ENCODE measurements at regions of chr5 and their contacts with region 1.

Region 1: GRCh38 chr5:76715736-76716455 is at the start of gene F2R:
- DNase-seq: peak in 1 of 2 experiments; percentile 80
- H3K4me3 ChIP-seq: peak within 1 kb of the TSS; percentile 60 to 88 (median 85)
- H3K27ac ChIP-seq: peak within 1 kb of the TSS; percentile 56
- H3K4me1 ChIP-seq: peaks cover 0 to 2% (median 0%) of the 10 kb centered on the region in 4 experiments; a peak in 2 of 7 replicates
- H3K27me3 ChIP-seq: peaks cover 5 to 19% (median 14%) of the 10 kb centered on the region in 4 experiments
- CTCF ChIP-seq: peak; percentile 55 to 76 (median 57)
- EP300 ChIP-seq: no peak
- POLR2A ChIP-seq: no peak
- RAD21 ChIP-seq: peak; percentile 43 to 58; a peak in 3 of 4 replicates
- total RNA-seq, gene F2R: 23.8 and 25.0 TPM in 2 replicates

Region 2: GRCh38 chr5:76705574-76705973 is 10.3 kb before region 1 on chr5:
- CTCF ChIA-PET with region 1: interaction called, 10 read pairs
- POLR2A ChIA-PET with region 1: interaction called, 3 read pairs
- DNase-seq: no peak
- H3K4me3 ChIP-seq: no peak overlapping the region
- H3K27ac ChIP-seq: no peak overlapping the region
- H3K4me1 ChIP-seq: no peaks in the 10 kb centered on the region
- H3K27me3 ChIP-seq: no peaks in the 10 kb centered on the region
- CTCF ChIP-seq: no peak
- EP300 ChIP-seq: no peak
- POLR2A ChIP-seq: no peak
- RAD21 ChIP-seq: no peak

Region 3: DNA sequence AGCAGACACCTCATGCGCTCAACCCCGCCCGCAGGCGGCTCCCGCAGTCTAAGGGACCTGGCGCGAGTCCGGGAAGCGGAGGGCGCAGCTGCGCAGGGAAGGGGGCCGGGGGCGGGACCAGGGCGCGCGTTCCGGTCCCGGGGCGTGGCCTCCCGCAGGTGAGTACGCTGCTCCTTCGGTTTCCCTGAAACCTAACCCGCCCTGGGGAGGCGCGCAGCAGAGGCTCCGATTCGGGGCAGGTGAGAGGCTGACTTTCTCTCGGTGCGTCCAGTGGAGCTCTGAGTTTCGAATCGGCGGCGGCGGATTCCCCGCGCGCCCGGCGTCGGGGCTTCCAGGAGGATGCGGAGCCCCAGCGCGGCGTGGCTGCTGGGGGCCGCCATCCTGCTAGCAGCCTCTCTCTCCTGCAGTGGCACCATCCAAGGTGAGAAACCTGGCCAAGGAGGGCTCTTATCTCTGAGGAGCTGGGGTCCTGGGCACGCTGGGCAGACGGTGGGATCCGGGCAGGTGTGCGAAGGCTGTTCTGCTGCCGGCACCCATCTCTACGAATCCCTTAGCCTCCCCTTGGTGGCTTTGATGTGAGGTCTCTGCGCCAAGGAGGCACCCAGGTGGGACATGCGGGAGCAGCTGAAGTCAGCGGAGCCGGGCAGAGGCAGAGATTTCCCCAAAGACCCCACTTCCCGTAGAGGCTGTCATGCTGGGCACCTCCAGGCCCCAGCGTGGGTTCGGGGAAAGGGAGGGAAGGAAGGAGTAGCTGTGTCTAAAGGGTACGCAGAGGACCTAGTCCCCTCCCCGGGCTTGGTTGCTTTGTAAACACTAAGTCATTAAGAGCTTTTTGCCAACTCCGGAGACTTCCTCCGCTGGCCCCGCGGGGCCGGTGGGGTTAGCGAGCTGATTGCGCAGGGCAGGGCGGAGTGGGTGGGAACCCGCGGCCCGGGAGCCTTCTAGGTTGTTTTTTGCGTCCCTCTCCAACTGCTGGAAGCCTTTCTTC is 103.2 kb after region 1 on chr5 and contains the start of gene F2RL1:
- CTCF ChIA-PET with region 1: interaction called, 10 read pairs
- POLR2A ChIA-PET with region 1: no interaction called
- DNase-seq: peak; percentile 88 to 92
- H3K4me3 ChIP-seq: peak within 1 kb of the TSS; percentile 73 to 99 (median 86)
- H3K27ac ChIP-seq: peak within 1 kb of the TSS; percentile 39; the same call in 1 of the 2 replicates
- H3K4me1 ChIP-seq: peaks cover 0 to 16% (median 8%) of the 10 kb centered on the region in 4 experiments; a peak in 5 of 7 replicates
- H3K27me3 ChIP-seq: peaks cover 0 to 5% (median 4%) of the 10 kb centered on the region in 4 experiments; a peak in 2 of 7 replicates
- CTCF ChIP-seq: 0 out of 4 replicates have a peak, but pooled peaks of 1 of the 3 experiments have one; percentile 6
- EP300 ChIP-seq: peak in 1 of 2 experiments; percentile 88; a peak in 1 of 3 replicates
- POLR2A ChIP-seq: peak; percentile 79 to 81
- RAD21 ChIP-seq: peak in 1 of 2 experiments; percentile 32; a peak in 1 of 4 replicates
- total RNA-seq, gene F2RL1: 23.2 and 23.5 TPM in 2 replicates

Region 4: GRCh38 chr5:76926329-76927105 is 210.6 kb after region 1 on chr5:
- CTCF ChIA-PET with region 1: no interaction called
- POLR2A ChIA-PET with region 1: no interaction called
- DNase-seq: no peak
- H3K4me3 ChIP-seq: no peak overlapping the region
- H3K27ac ChIP-seq: no peak overlapping the region
- H3K4me1 ChIP-seq: 0 out of 7 replicates have a peak, but pooled peaks cover 0 to 6% (median 0%) of the 10 kb centered on the region in 4 experiments
- H3K27me3 ChIP-seq: no peaks in the 10 kb centered on the region
- CTCF ChIP-seq: no peak
- EP300 ChIP-seq: no peak
- POLR2A ChIP-seq: no peak
- RAD21 ChIP-seq: no peak